Panc1 (cell line): ENCODE measurements at regions of chr12 and their contacts with region 1.

Region 1: DNA sequence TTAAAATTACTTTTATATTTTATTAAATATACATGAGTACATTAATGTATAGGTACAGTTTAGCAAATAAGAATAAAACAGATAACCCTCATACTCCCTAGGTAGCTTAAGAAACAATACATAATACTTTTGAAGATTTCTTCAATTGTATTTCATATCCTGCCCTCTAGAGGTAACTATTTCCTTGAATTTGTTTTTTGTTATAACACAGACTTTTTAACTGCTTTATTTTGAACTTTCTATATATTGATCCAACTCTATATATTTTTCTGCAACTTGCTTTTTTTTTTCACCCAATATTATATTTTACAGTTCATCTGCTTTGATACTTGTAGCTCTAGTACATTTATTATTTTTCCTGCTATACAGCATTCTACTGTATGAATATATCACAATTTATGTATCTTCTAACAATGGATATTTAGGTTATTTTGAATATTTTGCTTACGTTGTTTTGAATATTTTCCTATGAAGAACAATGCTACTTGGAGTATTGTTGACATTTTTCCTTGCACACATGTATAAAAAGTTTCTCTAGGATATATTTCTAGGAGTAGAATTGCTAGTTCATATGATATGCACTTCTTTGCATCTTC is 72.8 kb upstream of the ABCD2 start:
- DNase-seq: no peak
- ATAC-seq: no peak
- H3K4me3 ChIP-seq: no peak overlapping the region
- H3K27ac ChIP-seq: no peak overlapping the region
- H3K4me1 ChIP-seq: no peaks in the 10 kb centered on the region
- H3K27me3 ChIP-seq: no peaks in the 10 kb centered on the region
- CTCF ChIP-seq: no peak

Region 2: DNA sequence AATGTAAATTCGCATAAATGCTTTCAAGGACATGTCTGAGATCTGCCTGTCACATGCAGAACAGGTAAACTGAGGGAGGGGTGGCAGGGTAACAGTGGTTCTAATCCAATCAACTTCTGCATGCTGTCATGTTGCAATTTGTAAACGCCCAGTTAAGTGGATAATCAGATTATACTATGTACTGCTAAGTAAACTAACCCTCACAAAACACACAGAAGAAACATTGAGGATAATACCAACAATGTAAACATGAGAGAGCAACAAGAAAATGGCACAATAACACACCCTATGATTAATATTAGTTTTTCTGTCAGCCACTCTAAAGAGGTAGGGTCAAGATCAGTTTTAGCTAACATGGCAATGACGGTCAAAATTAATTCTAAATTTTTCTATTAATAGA is 373.2 kb before region 1 on chr12:
- CTCF ChIA-PET with region 1: no interaction called
- POLR2A ChIA-PET with region 1: no interaction called
- in situ Hi-C with region 1: no loop called
- intact Hi-C with region 1: loop called (anchors 10 kb)
- DNase-seq: no peak
- ATAC-seq: no peak
- H3K4me3 ChIP-seq: no peak overlapping the region
- H3K27ac ChIP-seq: no peak overlapping the region
- H3K4me1 ChIP-seq: no peaks in the 10 kb centered on the region
- H3K27me3 ChIP-seq: no peaks in the 10 kb centered on the region
- CTCF ChIP-seq: no peak

Region 3: DNA sequence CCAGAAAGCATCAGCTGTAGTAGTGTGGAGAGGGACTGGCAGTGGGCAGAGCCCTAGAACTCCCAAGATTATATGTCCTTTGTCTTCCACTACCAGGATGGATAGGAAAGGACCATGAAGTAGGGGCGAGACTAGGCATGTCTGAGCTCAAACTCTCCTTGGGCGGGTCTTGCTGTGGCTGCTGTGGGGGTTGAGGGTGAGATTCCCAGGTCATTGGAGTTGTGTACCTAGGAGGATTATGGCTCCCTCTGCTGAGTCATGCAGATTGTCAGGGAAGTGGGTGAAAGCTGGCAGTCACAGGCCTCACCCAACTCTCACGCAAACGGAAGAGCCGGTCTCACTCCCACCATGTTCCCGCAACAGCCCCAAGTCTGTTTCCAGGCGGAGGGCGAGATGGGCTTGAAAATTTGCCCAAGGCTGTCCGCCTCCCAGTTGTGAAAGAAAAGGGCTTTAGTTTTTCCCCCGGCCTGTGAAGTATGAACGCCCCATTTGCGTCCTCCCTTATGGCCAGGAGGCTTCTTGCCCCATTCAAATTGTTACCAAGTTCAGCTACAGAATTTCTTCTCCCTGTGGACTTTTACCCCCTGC is 254.1 kb after region 1 on chr12:
- CTCF ChIA-PET with region 1: no interaction called
- POLR2A ChIA-PET with region 1: interaction called, 12 read pairs
- in situ Hi-C with region 1: no loop called
- intact Hi-C with region 1: no loop called
- DNase-seq: no peak
- ATAC-seq: no peak
- H3K4me3 ChIP-seq: no peak overlapping the region
- H3K27ac ChIP-seq: no peak overlapping the region
- H3K4me1 ChIP-seq: no peaks in the 10 kb centered on the region
- H3K27me3 ChIP-seq: no peaks in the 10 kb centered on the region
- CTCF ChIP-seq: no peak